Activated CD8-positive, alpha-beta T cell treated with anti-CD3 and anti-CD28 coated beads, Interleukin-2, amount 10 ng/mL, durations not matched to agents 7 days and 5 days (primary cell): ENCODE measurements at regions of chr17 and their contacts with region 1.

Region 1: GRCh38 chr17:48804925-48805411 is 12.1 kb downstream of the TTLL6 start:
- DNase-seq: peak; percentile 78
- ATAC-seq: peak; percentile 94
- H3K4me3 Mint-ChIP-seq: no peak overlapping the region
- H3K27ac Mint-ChIP-seq: no peak overlapping the region
- H3K4me1 Mint-ChIP-seq: no peaks in the 10 kb centered on the region
- H3K27me3 Mint-ChIP-seq: peaks cover 18% of the 10 kb centered on the region

Region 2: GRCh38 chr17:48636177-48637018 is 168.6 kb before region 1 on chr17:
- CTCF ChIA-PET with region 1: no interaction called
- POLR2A ChIA-PET with region 1: no interaction called
- DNase-seq: peak; percentile 80
- ATAC-seq: peak; percentile 90
- H3K4me3 Mint-ChIP-seq: peak overlapping the region; percentile 18
- H3K27ac Mint-ChIP-seq: no peak overlapping the region
- H3K4me1 Mint-ChIP-seq: peaks cover 14% of the 10 kb centered on the region
- H3K27me3 Mint-ChIP-seq: peaks cover 84% of the 10 kb centered on the region

Region 3: GRCh38 chr17:48850792-48851323 is 45.9 kb after region 1 on chr17:
- CTCF ChIA-PET with region 1: interaction called, 11 read pairs
- POLR2A ChIA-PET with region 1: no interaction called
- DNase-seq: no peak
- ATAC-seq: peak; percentile 89
- H3K4me3 Mint-ChIP-seq: no peak overlapping the region
- H3K27ac Mint-ChIP-seq: peak overlapping the region; percentile 9
- H3K4me1 Mint-ChIP-seq: peaks cover 13% of the 10 kb centered on the region
- H3K27me3 Mint-ChIP-seq: no peaks in the 10 kb centered on the region

Region 4: GRCh38 chr17:49063652-49064051 is 258.7 kb after region 1 on chr17:
- CTCF ChIA-PET with region 1: no interaction called
- POLR2A ChIA-PET with region 1: no interaction called
- DNase-seq: no peak
- ATAC-seq: no peak
- H3K4me3 Mint-ChIP-seq: no peak overlapping the region
- H3K27ac Mint-ChIP-seq: no peak overlapping the region
- H3K4me1 Mint-ChIP-seq: no peaks in the 10 kb centered on the region
- H3K27me3 Mint-ChIP-seq: peaks cover 4% of the 10 kb centered on the region